ENCODE measurements at regions of chr1 and their contacts with region 1.

Region 1: GRCh38 chr1:226608699-226609505 is 60.3 kb downstream of the STUM start:
- DNase-seq: peak; percentile 59 to 87
- ATAC-seq: peak; percentile 73 to 92 (median 77)
- H3K4me3 ChIP-seq: no peak overlapping the region
- H3K4me3 Mint-ChIP-seq: no peak overlapping the region
- H3K27ac ChIP-seq: no peak overlapping the region
- H3K27ac Mint-ChIP-seq: no peak overlapping the region
- H3K4me1 ChIP-seq: peaks cover 2% of the 10 kb centered on the region
- H3K4me1 Mint-ChIP-seq: no peaks in the 10 kb centered on the region
- H3K27me3 ChIP-seq: no peaks in the 10 kb centered on the region
- H3K27me3 Mint-ChIP-seq: peaks cover 0 to 6% of the 10 kb centered on the region in 2 donors
- CTCF ChIP-seq: peak; percentile 95

Region 2: GRCh38 chr1:226547754-226548191 is 61.1 kb before region 1 on chr1:
- intact Hi-C with region 1: loop called (anchors 2 kb)
- DNase-seq: peak; percentile 45 to 80
- ATAC-seq: peak; percentile 68 to 81 (median 75)
- H3K4me3 ChIP-seq: no peak overlapping the region
- H3K4me3 Mint-ChIP-seq: peak overlapping the region; percentile 56
- H3K27ac ChIP-seq: no peak overlapping the region
- H3K27ac Mint-ChIP-seq: no peak overlapping the region
- H3K4me1 ChIP-seq: peaks cover 25% of the 10 kb centered on the region
- H3K4me1 Mint-ChIP-seq: peaks cover 6 to 17% of the 10 kb centered on the region in 2 donors
- H3K27me3 ChIP-seq: peaks cover 29% of the 10 kb centered on the region
- H3K27me3 Mint-ChIP-seq: peaks cover 42 to 51% of the 10 kb centered on the region in 2 donors
- CTCF ChIP-seq: peak; percentile 62

Measured in natural killer cell (primary cell).